ENCODE measurements at regions of chr10 and their contacts with region 1.

Region 1: GRCh38 chr10:113678690-113679462 is 836 bp upstream of the CASP7 start:
- DNase-seq: peak; percentile 39 to 78 (median 69)
- ATAC-seq: peak; percentile 30
- H3K4me3 ChIP-seq: peak overlapping the region; percentile 94 to 95
- H3K4me3 Mint-ChIP-seq: peak overlapping the region; percentile 96
- H3K27ac ChIP-seq: peak overlapping the region; percentile 84 to 88
- H3K27ac Mint-ChIP-seq: peak overlapping the region; percentile 62
- H3K4me1 ChIP-seq: peaks cover 24% of the 10 kb centered on the region
- H3K4me1 Mint-ChIP-seq: peaks cover 41% of the 10 kb centered on the region
- H3K27me3 ChIP-seq: no peaks in the 10 kb centered on the region
- H3K27me3 Mint-ChIP-seq: peaks cover 3% of the 10 kb centered on the region
- CTCF ChIP-seq: peak; percentile 46

Region 2: GRCh38 chr10:112183329-112184051 is 1495.4 kb before region 1 on chr10 and contains the start of gene GPAM:
- CTCF ChIA-PET with region 1: no interaction called
- POLR2A ChIA-PET with region 1: no interaction called
- intact Hi-C with region 1: loop called in 1 of 2 experiments (anchors 5 kb)
- DNase-seq: peak; percentile 95 to 100 (median 99)
- ATAC-seq: peak; percentile 98
- H3K4me3 ChIP-seq: peak within 1 kb of the TSS; percentile 65 to 92
- H3K4me3 Mint-ChIP-seq: peak within 1 kb of the TSS; percentile 87
- H3K27ac ChIP-seq: peak within 1 kb of the TSS; percentile 76 to 78
- H3K27ac Mint-ChIP-seq: peak within 1 kb of the TSS; percentile 93
- H3K4me1 ChIP-seq: peaks cover 17% of the 10 kb centered on the region
- H3K4me1 Mint-ChIP-seq: peaks cover 28% of the 10 kb centered on the region
- H3K27me3 ChIP-seq: no peaks in the 10 kb centered on the region
- H3K27me3 Mint-ChIP-seq: no peaks in the 10 kb centered on the region
- CTCF ChIP-seq: no peak
- total RNA-seq, gene GPAM: 3.2 to 4.2 TPM

Region 3: DNA sequence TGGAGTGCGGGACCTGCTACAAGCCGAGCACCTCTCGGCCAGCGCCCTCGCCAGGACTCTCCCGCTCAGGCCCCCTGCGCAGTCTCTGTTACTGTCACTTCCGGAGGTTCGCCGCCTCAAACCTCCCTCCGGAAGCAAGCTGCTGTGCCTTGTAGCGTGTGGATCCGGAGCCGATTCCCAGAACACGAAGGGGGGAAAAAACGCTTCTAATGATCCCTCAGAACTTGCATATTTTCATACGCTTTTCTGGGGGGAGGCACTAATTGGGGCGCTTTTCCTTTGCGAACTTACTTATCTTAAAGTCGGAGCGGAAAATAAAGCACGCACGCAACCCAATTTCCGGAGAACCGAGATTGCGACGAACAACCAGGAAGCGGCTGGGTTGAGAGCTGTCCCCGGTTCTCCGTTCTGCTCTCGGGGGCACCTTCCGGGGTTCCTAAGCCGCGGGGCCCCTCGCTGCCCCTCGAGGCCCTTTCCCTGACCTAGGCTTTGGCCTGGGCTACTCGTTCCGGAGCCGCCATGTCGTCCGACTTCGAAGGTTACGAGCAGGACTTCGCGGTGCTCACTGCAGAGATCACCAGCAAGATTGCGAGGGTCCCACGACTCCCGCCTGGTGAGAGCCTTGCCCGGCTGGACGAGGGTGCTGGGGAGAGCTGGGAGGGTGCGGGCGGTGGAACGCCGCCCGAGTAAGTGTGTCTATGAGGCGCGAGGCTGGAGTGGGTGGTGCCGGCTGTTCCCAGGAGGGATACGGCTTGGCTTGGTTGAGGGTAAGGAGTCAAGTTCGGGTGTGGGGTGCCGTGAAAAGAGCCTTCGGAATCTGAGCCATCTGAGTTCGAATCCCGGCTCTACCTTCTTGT is 1231.8 kb before region 1 on chr10 and contains the starts of genes VTI1A and ZDHHC6:
- CTCF ChIA-PET with region 1: no interaction called
- POLR2A ChIA-PET with region 1: no interaction called
- intact Hi-C with region 1: loop called in 1 of 2 experiments (anchors 10 kb)
- DNase-seq: peak; percentile 68 to 92 (median 85)
- ATAC-seq: peak; percentile 88
- H3K4me3 ChIP-seq: peak within 1 kb of the TSS; percentile 93 to 96
- H3K4me3 Mint-ChIP-seq: peak within 1 kb of the TSS; percentile 94
- H3K27ac ChIP-seq: peak within 1 kb of the TSS; percentile 91 to 92
- H3K27ac Mint-ChIP-seq: peak within 1 kb of the TSS; percentile 95
- H3K4me1 ChIP-seq: peaks cover 24% of the 10 kb centered on the region
- H3K4me1 Mint-ChIP-seq: peaks cover 66% of the 10 kb centered on the region
- H3K27me3 ChIP-seq: no peaks in the 10 kb centered on the region
- H3K27me3 Mint-ChIP-seq: no peaks in the 10 kb centered on the region
- CTCF ChIP-seq: no peak
- total RNA-seq, gene VTI1A: 59.0 to 62.7 TPM
- total RNA-seq, gene ZDHHC6: 41.4 to 41.7 TPM

Region 4: GRCh38 chr10:113854011-113854760 is 175.3 kb after region 1 on chr10 and contains the starts of genes DCLRE1A and NHLRC2:
- CTCF ChIA-PET with region 1: no interaction called
- POLR2A ChIA-PET with region 1: no interaction called
- intact Hi-C with region 1: loop called (anchors 5 kb)
- DNase-seq: peak; percentile 39 to 80 (median 64)
- ATAC-seq: peak; percentile 43
- H3K4me3 ChIP-seq: peak within 1 kb of the TSS; percentile 76 to 84
- H3K4me3 Mint-ChIP-seq: peak within 1 kb of the TSS; percentile 95
- H3K27ac ChIP-seq: peak within 1 kb of the TSS; percentile 73 to 83
- H3K27ac Mint-ChIP-seq: peak within 1 kb of the TSS; percentile 93
- H3K4me1 ChIP-seq: peaks cover 30% of the 10 kb centered on the region
- H3K4me1 Mint-ChIP-seq: peaks cover 63% of the 10 kb centered on the region
- H3K27me3 ChIP-seq: no peaks in the 10 kb centered on the region
- H3K27me3 Mint-ChIP-seq: no peaks in the 10 kb centered on the region
- CTCF ChIP-seq: no peak
- total RNA-seq, gene DCLRE1A: 0.49 to 0.89 TPM
- total RNA-seq, gene NHLRC2: 6.3 to 7.0 TPM

Region 5: GRCh38 chr10:113914956-113915355 is 236.1 kb after region 1 on chr10:
- CTCF ChIA-PET with region 1: no interaction called
- POLR2A ChIA-PET with region 1: no interaction called
- intact Hi-C with region 1: no loop called
- DNase-seq: no peak
- ATAC-seq: no peak
- H3K4me3 ChIP-seq: no peak overlapping the region
- H3K4me3 Mint-ChIP-seq: no peak overlapping the region
- H3K27ac ChIP-seq: no peak overlapping the region
- H3K27ac Mint-ChIP-seq: no peak overlapping the region
- H3K4me1 ChIP-seq: no peaks in the 10 kb centered on the region
- H3K4me1 Mint-ChIP-seq: no peaks in the 10 kb centered on the region
- H3K27me3 ChIP-seq: no peaks in the 10 kb centered on the region
- H3K27me3 Mint-ChIP-seq: no peaks in the 10 kb centered on the region
- CTCF ChIP-seq: no peak

Region 6: GRCh38 chr10:113960617-113961181 is 281.8 kb after region 1 on chr10:
- CTCF ChIA-PET with region 1: no interaction called
- POLR2A ChIA-PET with region 1: no interaction called
- intact Hi-C with region 1: loop called in 1 of 2 experiments (anchors 10 kb)
- DNase-seq: peak in 7 of 9 experiments; percentile 13 to 86 (median 56)
- ATAC-seq: peak; percentile 22
- H3K4me3 ChIP-seq: peak overlapping the region in 1 of 2 experiments; percentile 17
- H3K4me3 Mint-ChIP-seq: peak overlapping the region; percentile 46
- H3K27ac ChIP-seq: peak overlapping the region; percentile 20 to 68
- H3K27ac Mint-ChIP-seq: peak overlapping the region; percentile 83
- H3K4me1 ChIP-seq: peaks cover 36% of the 10 kb centered on the region
- H3K4me1 Mint-ChIP-seq: peaks cover 37% of the 10 kb centered on the region
- H3K27me3 ChIP-seq: no peaks in the 10 kb centered on the region
- H3K27me3 Mint-ChIP-seq: peaks cover 9% of the 10 kb centered on the region
- CTCF ChIP-seq: no peak

Region 7: DNA sequence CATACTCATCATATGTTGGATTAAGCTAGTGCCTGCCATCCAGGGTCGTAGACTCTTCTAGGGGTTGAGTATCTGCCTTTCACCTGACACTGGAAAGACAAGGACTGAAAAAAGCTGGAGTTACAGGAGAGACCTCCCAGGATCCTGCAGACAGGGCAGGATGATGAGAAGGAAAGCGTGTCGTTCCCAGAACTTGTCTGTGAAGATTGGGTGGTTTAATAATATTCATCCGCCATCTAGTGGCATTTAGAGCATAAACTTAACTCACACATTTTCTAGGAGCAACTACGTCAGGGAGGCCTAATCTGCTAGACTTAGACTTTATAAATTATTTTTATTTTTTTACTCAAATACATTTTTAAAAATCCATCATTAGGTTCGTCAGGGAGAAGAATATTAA is 424.4 kb after region 1 on chr10:
- CTCF ChIA-PET with region 1: interaction called, 3 read pairs
- POLR2A ChIA-PET with region 1: no interaction called
- intact Hi-C with region 1: loop called in 1 of 2 experiments (anchors 1 kb)
- DNase-seq: peak in 2 of 9 experiments; percentile 51 to 63
- ATAC-seq: no peak
- H3K4me3 ChIP-seq: no peak overlapping the region
- H3K4me3 Mint-ChIP-seq: no peak overlapping the region
- H3K27ac ChIP-seq: no peak overlapping the region
- H3K27ac Mint-ChIP-seq: no peak overlapping the region
- H3K4me1 ChIP-seq: peaks cover 11% of the 10 kb centered on the region
- H3K4me1 Mint-ChIP-seq: peaks cover 29% of the 10 kb centered on the region
- H3K27me3 ChIP-seq: peaks cover 7 to 10% of the 10 kb centered on the region in 2 experiments
- H3K27me3 Mint-ChIP-seq: peaks cover 26% of the 10 kb centered on the region
- CTCF ChIP-seq: peak; percentile 56

Region 8: DNA sequence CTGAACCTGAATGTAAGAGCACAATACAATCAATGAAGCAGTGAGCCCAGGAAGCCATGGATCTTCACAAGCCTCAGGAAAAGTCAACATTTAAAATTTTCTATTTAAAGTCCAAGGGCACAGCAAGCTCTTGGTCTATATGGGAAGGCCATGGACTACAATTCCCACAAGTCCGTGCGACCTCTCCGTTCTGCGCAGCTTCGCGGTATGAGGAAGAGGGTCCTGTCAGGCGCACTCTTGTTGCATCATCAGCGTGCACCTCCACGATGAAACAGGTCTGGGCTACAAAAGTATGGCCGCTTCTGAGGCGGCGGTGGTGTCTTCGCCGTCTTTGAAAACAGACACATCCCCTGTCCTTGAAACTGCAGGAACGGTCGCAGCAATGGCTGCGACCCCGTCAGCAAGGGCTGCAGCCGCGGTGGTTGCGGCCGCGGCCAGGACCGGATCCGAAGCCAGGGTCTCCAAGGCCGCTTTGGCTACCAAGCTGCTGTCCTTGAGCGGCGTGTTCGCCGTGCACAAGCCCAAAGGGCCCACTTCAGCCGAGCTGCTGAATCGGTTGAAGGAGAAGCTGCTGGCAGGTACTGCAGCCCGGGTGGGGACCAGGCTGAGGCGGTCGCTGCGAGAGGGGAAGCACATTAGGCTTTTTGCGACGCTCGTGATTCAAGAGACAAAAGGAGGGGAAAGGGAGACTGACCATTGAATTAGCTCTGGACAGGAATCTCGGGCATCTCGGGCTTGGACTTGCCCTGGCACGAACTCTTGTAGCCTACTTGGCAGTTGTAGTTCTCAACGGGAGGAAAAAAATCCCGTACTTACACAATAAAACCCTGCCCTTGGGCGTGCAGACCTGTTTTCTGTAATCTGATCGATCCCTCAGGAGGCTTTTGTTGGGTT is 1259.3 kb after region 1 on chr10 and contains the start of gene TRUB1:
- CTCF ChIA-PET with region 1: no interaction called
- POLR2A ChIA-PET with region 1: no interaction called
- intact Hi-C with region 1: loop called in 1 of 2 experiments (anchors 2 kb)
- DNase-seq: peak; percentile 75 to 97 (median 90)
- ATAC-seq: peak; percentile 100
- H3K4me3 ChIP-seq: peak within 1 kb of the TSS; percentile 85 to 88
- H3K4me3 Mint-ChIP-seq: peak within 1 kb of the TSS; percentile 96
- H3K27ac ChIP-seq: peak within 1 kb of the TSS; percentile 73 to 91
- H3K27ac Mint-ChIP-seq: peak within 1 kb of the TSS; percentile 97
- H3K4me1 ChIP-seq: peaks cover 15% of the 10 kb centered on the region
- H3K4me1 Mint-ChIP-seq: peaks cover 37% of the 10 kb centered on the region
- H3K27me3 ChIP-seq: no peaks in the 10 kb centered on the region
- H3K27me3 Mint-ChIP-seq: no peaks in the 10 kb centered on the region
- CTCF ChIP-seq: no peak
- total RNA-seq, gene TRUB1: 7.7 to 9.7 TPM

Measured in CD8-positive, alpha-beta T cell (primary cell).